Activated T-helper 2 cell treated with anti-CD3 and anti-CD28 coated beads, Interferon-gamma antibody, Interleukin-2, Interleukin-4, amounts not matched to agents 10 μg/mL and 5 μg/mL and 100 μg/mL, durations not matched to agents 14 hours and 24 hours and 36 hours (primary cell): ENCODE measurements at regions of chr15 and their contacts with region 1.

Region 1: GRCh38 chr15:50354838-50355618 is at the start of gene GABPB1:
- DNase-seq: peak; percentile 89
- H3K4me3 Mint-ChIP-seq: peak within 1 kb of the TSS; percentile 98
- H3K27ac Mint-ChIP-seq: peak within 1 kb of the TSS; percentile 100
- H3K4me1 Mint-ChIP-seq: peaks cover 37% of the 10 kb centered on the region
- H3K27me3 Mint-ChIP-seq: no peaks in the 10 kb centered on the region
- total RNA-seq, gene GABPB1: 69.3 and 69.5 TPM in 2 replicates

Region 2: GRCh38 chr15:50134520-50135024 is 220.5 kb before region 1 on chr15:
- intact Hi-C with region 1: loop called (anchors 2 kb)
- DNase-seq: no peak
- H3K4me3 Mint-ChIP-seq: peak overlapping the region; percentile 41
- H3K27ac Mint-ChIP-seq: peak overlapping the region; percentile 91
- H3K4me1 Mint-ChIP-seq: peaks cover 61% of the 10 kb centered on the region
- H3K27me3 Mint-ChIP-seq: no peaks in the 10 kb centered on the region

Region 3: DNA sequence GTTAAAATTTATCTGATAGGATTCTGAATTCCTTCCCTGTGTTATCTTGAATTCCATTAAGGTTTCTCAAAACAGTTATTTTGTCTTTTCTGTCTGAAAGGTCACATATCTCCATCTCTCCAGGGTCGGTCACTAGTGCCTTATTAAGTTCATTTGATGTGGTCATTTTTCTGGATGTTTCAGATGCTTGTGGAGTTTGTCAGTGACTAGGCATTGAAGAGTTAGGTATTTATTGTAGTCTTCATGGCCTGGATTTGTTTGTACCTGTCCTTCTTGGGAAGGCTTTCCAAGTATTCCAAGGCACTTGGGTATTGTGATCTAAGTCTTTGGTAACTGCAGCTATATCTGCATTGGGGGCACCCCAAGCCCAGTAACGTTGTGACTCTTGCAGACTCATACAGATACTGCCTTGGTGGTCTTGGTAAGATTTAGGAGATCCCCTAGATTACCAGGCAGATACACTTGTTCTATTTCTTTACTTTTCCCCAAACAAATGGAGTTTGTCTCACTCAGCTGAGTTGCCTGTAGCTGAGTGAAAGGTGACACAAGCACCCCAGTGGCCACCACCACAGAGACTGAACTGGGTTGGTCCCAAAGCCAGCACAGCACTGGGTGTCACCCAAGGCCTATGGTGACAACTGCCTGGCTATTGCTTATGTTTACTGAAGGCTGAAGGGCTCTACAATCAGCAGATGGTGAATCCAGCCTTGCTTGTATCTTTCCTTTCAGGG is 191.9 kb before region 1 on chr15:
- intact Hi-C with region 1: no loop called
- DNase-seq: no peak
- H3K4me3 Mint-ChIP-seq: no peak overlapping the region
- H3K27ac Mint-ChIP-seq: no peak overlapping the region
- H3K4me1 Mint-ChIP-seq: peaks cover 17% of the 10 kb centered on the region
- H3K27me3 Mint-ChIP-seq: peaks cover 8% of the 10 kb centered on the region

Region 4: GRCh38 chr15:50227076-50227475 is 128.0 kb before region 1 on chr15:
- intact Hi-C with region 1: no loop called
- DNase-seq: no peak
- H3K4me3 Mint-ChIP-seq: no peak overlapping the region
- H3K27ac Mint-ChIP-seq: no peak overlapping the region
- H3K4me1 Mint-ChIP-seq: peaks cover 3% of the 10 kb centered on the region
- H3K27me3 Mint-ChIP-seq: no peaks in the 10 kb centered on the region

Region 5: GRCh38 chr15:50260969-50261496 is 94.0 kb before region 1 on chr15:
- intact Hi-C with region 1: loop called (anchors 1 kb)
- DNase-seq: no peak
- H3K4me3 Mint-ChIP-seq: peak overlapping the region; percentile 64
- H3K27ac Mint-ChIP-seq: peak overlapping the region; percentile 98
- H3K4me1 Mint-ChIP-seq: peaks cover 76% of the 10 kb centered on the region
- H3K27me3 Mint-ChIP-seq: no peaks in the 10 kb centered on the region

Region 6: DNA sequence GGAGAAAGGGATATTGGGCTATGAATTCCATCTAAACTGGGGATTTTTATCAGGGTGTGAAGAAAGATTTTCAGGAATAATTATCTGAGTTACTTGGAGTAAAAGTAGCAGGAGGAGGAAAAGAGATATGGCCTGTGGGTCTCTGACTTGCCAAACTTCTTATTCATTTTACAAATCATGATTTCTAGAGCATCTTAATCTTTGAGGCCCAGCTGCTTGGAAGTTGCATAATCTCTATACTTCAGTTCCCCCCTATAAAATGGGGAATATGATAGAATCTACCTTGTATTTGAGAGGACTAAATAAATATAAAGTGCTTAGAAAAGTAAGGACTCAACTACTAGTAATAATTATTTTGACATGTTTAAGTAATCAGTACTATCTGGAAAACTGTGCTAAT is 10.9 kb after region 1 on chr15:
- intact Hi-C with region 1: no loop called
- DNase-seq: no peak
- H3K4me3 Mint-ChIP-seq: no peak overlapping the region
- H3K27ac Mint-ChIP-seq: peak overlapping the region; percentile 24
- H3K4me1 Mint-ChIP-seq: peaks cover 4% of the 10 kb centered on the region
- H3K27me3 Mint-ChIP-seq: no peaks in the 10 kb centered on the region

Region 7: GRCh38 chr15:50411870-50412269 is 56.8 kb after region 1 on chr15:
- intact Hi-C with region 1: no loop called
- DNase-seq: no peak
- H3K4me3 Mint-ChIP-seq: no peak overlapping the region
- H3K27ac Mint-ChIP-seq: no peak overlapping the region
- H3K4me1 Mint-ChIP-seq: no peaks in the 10 kb centered on the region
- H3K27me3 Mint-ChIP-seq: peaks cover 8% of the 10 kb centered on the region

Region 8: GRCh38 chr15:50484781-50485180 is 129.8 kb after region 1 on chr15:
- intact Hi-C with region 1: loop called (anchors 2 kb)
- DNase-seq: no peak
- H3K4me3 Mint-ChIP-seq: no peak overlapping the region
- H3K27ac Mint-ChIP-seq: peak overlapping the region; percentile 38
- H3K4me1 Mint-ChIP-seq: peaks cover 26% of the 10 kb centered on the region
- H3K27me3 Mint-ChIP-seq: no peaks in the 10 kb centered on the region

Region 9: GRCh38 chr15:50765195-50765973 is 410.4 kb after region 1 on chr15 and contains the start of gene SPPL2A:
- intact Hi-C with region 1: loop called (anchors 1 kb)
- DNase-seq: peak; percentile 78
- H3K4me3 Mint-ChIP-seq: peak within 1 kb of the TSS; percentile 99
- H3K27ac Mint-ChIP-seq: peak within 1 kb of the TSS; percentile 99
- H3K4me1 Mint-ChIP-seq: peaks cover 48% of the 10 kb centered on the region
- H3K27me3 Mint-ChIP-seq: no peaks in the 10 kb centered on the region
- total RNA-seq, gene SPPL2A: 97.3 and 99.0 TPM in 2 replicates